Left cardiac atrium (tissue), 4 donors: ENCODE measurements at regions of chr15 and their contacts with region 1.

Region 1: GRCh38 chr15:40412095-40412759 is 6.6 kb downstream of the IVD start:
- DNase-seq: no peak
- ATAC-seq: peak in 1 of 2 donors; percentile 58

Region 2: GRCh38 chr15:40367686-40368611 is 44.3 kb before region 1 on chr15:
- intact Hi-C with region 1: loop called in 1 of 2 experiments (anchors 10 kb)
- DNase-seq: peak; percentile 89
- ATAC-seq: peak; percentile 80 to 83

Region 3: GRCh38 chr15:40481341-40482074 is 69.3 kb after region 1 on chr15:
- intact Hi-C with region 1: no loop called
- DNase-seq: no peak
- ATAC-seq: no peak

Region 4: DNA sequence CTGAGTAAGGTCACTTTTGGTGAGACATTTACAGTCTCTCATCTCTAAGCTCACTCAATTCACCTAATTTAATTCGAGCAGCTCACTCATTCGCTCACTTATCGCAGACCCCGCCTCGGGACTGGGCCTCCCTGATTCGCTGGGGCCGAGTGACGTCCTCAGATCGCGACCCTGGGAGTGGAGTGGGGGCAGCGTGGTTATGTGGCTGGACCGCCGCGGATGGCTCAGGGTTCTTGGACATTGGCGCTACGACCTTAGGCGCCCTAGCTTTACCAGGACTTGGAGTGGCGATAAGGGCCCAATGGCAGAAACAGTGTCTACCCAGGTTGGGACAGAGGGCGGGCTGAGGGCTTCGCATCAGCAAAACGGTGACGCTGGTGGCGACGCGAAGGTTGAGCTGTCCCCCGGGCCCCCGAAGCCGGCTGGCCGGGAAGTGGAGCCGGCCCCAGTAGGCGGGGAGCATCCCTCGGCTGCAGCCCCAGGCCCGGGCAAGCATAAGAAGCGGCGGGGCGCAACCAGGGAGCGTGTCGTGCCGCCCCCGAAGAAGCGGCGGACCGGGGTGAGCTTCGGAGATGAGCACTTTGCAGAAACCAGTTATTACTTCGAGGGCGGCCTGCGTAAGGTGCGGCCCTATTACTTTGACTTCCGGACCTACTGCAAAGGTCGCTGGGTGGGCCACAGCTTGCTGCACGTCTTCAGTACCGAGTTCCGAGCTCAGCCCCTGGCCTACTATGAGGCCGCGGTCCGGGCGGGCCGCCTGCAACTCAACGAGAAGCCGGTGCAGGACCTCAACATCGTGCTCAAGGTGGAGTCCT is 157.1 kb after region 1 on chr15 and contains the start of gene RPUSD2:
- intact Hi-C with region 1: no loop called
- DNase-seq: peak; percentile 96
- ATAC-seq: peak; percentile 85 to 88
- total RNA-seq, gene RPUSD2: 7.9 to 11.3 TPM

Region 5: DNA sequence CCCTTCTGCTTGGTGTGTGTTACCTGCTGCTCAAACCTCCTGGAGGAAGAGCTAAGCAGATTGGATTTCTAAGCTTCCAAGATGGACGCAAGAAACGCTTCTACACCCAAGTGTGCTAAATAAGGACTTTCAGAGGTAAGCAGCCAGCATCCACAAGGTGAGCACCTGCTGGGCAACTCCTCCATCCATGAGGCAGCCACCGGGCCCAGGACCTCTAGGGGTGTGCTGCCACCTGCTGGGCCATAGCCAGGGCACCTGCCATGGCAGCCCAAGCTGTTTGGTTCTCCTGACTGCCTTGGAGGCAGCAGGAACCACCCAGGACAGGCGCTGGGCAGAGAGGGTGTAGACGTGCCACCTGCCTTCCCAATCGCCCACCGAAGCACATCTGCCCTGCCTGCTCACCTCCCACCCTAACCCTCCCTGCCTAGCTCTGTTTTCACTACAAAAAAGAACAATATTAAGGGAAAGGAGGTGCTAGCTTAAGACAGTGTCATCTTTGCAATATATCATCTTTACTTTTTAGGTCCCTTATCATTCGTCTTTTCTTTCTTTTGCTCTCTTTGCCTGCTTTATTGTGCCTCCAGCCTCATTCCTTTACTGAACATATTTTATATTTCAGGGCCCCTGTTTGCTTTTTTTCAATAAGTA is 370.5 kb after region 1 on chr15:
- intact Hi-C with region 1: no loop called
- DNase-seq: no peak
- ATAC-seq: peak; percentile 71 to 76